ENCODE measurements at regions of chr13 and their contacts with region 1.

Region 1: DNA sequence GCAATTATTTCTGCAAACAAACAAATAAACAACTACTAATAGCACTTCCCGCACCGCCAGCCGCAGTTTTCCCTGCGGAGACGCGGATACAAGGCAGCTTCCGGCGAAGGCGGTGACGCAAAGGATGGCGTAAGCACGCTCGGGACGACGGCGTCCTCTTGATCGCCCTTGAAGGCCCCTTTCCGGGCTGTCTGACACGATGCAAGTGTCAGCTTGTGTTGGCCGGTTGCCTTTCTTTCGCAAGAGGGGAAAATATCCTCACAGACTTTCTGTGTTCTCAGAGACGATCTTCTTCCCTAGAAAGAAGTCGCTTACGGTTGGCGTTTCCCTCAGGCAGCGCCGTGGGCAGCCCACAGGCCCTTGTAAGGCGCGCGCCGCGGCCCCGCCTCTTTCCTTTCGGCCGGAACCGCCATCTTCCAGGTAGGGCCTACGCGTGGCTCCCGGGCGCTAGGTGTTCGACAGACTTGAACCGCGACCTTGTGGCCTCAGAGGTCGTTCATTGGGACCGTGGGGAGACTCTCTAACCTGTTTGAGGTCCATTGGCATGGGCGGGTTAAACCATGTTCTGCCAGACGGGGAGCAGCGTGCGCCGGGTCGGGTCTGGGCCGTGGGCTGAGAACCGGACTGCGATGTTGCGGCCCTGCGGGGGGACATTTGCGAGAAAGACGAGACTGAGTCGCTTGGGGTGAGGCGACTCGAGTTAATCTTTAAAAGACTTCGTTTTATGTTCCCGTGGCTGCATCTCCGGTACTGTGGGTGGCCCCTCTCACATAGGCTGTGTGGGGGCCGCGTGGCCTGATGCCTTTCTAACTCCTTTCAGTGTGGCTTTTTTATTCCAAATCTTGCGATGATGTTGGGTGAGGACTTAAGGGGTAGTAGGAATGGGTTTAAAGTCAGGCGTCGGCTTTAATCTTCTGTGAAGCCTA is at the start of gene RPL21:
- DNase-seq: peak; percentile 97
- total RNA-seq, gene RPL21: 512 TPM

Region 2: DNA sequence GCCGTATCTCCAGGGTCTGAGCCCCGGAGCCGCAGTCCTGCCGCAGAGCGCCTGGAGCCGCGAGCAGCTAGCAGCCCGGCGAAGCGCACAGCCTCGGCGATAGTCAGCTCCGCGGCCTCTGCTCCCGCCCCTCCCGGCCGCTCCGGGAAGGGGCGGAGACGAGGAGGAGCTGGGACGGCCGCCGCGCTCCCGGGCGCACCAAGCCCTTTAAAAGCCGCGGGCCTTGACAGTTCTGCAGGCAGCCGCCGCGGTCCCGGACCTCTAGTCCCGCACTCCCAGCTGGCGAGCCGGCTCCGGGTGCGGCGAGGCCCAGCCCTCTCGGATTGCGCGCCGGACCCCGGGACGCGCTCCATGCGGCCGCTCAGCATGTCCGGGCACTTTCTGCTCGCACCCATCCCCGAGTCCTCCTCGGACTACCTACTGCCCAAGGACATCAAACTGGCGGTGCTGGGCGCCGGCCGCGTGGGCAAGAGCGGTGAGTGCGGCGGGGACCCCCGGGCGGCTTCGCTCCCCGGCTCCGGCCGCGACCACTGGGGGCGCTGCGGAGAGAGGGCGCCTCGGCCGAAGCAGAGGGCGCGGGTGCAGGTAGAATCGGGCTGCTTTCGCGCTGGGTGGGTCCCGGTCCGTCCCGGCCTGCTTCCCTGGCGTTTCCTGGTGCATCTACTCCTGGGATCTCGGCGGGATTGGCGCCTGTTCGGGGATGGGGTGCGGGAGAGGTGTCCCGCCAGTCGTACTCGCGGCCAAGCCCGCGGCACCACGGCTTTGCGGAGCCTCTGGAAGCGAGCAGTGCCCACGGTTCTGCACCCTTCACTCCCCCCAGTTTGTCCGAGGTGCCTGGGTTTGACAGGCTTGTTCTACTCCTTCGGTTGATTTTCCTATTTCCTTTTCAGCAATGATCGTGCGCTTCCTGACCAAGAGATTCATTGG is 19.4 kb after region 1 on chr13 and contains the start of gene RASL11A:
- intact Hi-C with region 1: loop called (anchors 2 kb)
- DNase-seq: peak; percentile 90
- total RNA-seq, gene RASL11A: 4.7 TPM

Region 3: DNA sequence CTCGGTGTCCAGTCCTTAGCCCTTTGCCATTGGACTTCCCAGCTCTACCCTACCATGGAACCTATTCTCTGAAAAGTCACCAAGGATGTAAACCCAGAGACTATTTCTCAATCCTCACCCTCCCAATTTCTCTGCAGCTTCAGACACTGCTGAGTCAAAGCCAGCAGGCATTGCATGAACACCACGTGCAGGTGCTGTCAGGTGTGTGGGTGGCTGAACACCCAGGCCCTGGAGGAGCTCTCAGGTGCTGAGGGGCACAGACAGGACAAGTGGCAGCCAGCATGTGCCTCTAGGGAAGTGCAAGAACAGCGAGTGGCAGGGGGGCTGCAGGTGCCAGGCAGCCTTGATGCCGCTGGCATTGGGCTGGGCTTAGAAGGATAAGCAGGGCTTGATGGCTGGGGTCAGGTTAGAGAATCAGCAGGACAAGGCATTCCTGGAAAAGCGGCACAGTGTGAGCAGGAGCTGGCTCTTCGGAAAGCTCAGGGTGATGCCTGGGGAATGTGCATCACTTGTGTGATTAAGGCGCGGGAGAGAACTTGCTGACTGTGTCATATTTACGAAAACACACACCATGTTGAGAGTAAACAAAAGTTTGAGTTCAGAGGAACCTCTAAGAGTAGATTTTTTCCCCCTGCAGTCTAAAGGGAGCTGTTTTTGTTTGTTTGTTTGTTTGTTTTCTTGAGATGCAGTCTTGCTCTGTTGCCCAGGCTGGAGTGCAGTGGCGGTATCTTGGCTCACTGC is 285.1 kb after region 1 on chr13:
- intact Hi-C with region 1: no loop called
- DNase-seq: no peak